ENCODE measurements at regions of chr6 and their contacts with region 1.

Region 1: DNA sequence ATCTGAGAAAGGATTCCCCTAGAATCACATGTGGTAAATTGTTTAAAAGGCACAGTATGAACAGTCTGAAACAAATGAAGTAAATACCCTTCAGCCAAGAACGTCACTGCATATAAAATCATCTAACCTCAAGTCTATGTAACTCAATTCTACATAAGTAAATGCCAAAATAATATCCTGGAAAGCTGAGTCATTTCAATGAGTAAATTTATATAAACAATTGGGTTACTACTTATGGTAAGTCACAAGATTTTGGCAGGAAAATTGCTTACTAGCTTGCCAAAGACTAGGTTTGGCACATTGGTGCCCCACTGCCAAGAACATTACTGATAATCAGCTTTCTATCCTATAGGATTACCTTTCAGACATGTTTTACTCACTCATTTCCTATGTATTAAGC is 8.4 kb downstream of the GMDS start:
- DNase-seq: peak; percentile 99
- ATAC-seq: peak; percentile 95
- H3K4me3 ChIP-seq: peak overlapping the region; percentile 5; the same call in 1 of the 2 replicates
- H3K27ac ChIP-seq: peak overlapping the region; percentile 80
- H3K4me1 ChIP-seq: peaks cover 31% of the 10 kb centered on the region
- H3K27me3 ChIP-seq: no peaks in the 10 kb centered on the region
- CTCF ChIP-seq: no peak

Region 2: GRCh38 chr6:2257363-2257762 is 20.4 kb after region 1 on chr6:
- CTCF ChIA-PET with region 1: no interaction called
- POLR2A ChIA-PET with region 1: interaction called, 14 read pairs
- intact Hi-C with region 1: no loop called
- DNase-seq: peak; percentile 18
- ATAC-seq: no peak
- H3K4me3 ChIP-seq: no peak overlapping the region
- H3K27ac ChIP-seq: no peak overlapping the region
- H3K4me1 ChIP-seq: no peaks in the 10 kb centered on the region; the same call in 1 of the 2 replicates
- H3K27me3 ChIP-seq: no peaks in the 10 kb centered on the region
- CTCF ChIP-seq: no peak

Measured in PC-3 (cell line).